Naive thymus-derived CD4-positive, alpha-beta T cell (primary cell): ENCODE measurements at regions of chr3 and their contacts with region 1.

Region 1: GRCh38 chr3:107522510-107523288 is at the start of gene BBX:
- DNase-seq: peak; percentile 88 to 97 (median 97)
- ATAC-seq: peak; percentile 95
- H3K4me3 ChIP-seq: peak within 1 kb of the TSS; percentile 82
- H3K4me3 Mint-ChIP-seq: peak within 1 kb of the TSS; percentile 75 to 100 (median 98)
- H3K27ac ChIP-seq: peak within 1 kb of the TSS; percentile 91
- H3K27ac Mint-ChIP-seq: peak within 1 kb of the TSS; percentile 84 to 99 (median 97)
- H3K4me1 ChIP-seq: peaks cover 9 to 14% of the 10 kb centered on the region in 2 donors
- H3K4me1 Mint-ChIP-seq: peaks cover 17 to 35% (median 30%) of the 10 kb centered on the region in 7 donors
- H3K27me3 ChIP-seq: no peaks in the 10 kb centered on the region
- H3K27me3 Mint-ChIP-seq: peaks cover 0 to 2% (median 0%) of the 10 kb centered on the region in 5 donors
- total RNA-seq, gene BBX: 44.3 to 103 (median 73.5) TPM

Region 2: DNA sequence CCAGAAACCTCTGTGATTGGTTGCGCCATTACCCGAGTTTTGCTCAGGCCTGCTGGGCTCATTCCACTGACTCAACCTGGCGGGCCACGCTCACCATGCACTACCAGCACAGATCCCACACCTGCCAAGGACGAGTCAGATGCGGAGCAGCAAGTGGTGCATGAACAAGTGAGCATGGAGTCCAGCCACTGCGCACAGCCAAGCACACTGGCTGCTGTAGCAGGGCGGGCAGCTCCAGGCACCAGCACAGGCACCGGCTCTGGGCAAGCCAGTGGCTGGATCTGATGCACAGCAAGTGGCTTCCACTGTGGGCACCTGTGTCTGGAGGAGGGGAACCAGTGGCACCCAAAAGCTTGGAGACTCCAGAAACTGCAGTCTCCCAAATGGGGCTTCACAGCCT is 1764.2 kb before region 1 on chr3:
- CTCF ChIA-PET with region 1: no interaction called
- POLR2A ChIA-PET with region 1: no interaction called
- intact Hi-C with region 1: loop called in 1 of 2 experiments (anchors 5 kb)
- DNase-seq: no peak
- ATAC-seq: no peak
- H3K4me3 ChIP-seq: no peak overlapping the region
- H3K4me3 Mint-ChIP-seq: peak overlapping the region in 2 of 10 donors; percentile 4 to 12
- H3K27ac ChIP-seq: no peak overlapping the region
- H3K27ac Mint-ChIP-seq: peak overlapping the region in 7 of 9 donors; percentile 25 to 98 (median 68)
- H3K4me1 ChIP-seq: peaks cover 33 to 46% of the 10 kb centered on the region in 2 donors
- H3K4me1 Mint-ChIP-seq: peaks cover 28 to 84% (median 66%) of the 10 kb centered on the region in 7 donors
- H3K27me3 ChIP-seq: no peaks in the 10 kb centered on the region
- H3K27me3 Mint-ChIP-seq: no peaks in the 10 kb centered on the region

Region 3: DNA sequence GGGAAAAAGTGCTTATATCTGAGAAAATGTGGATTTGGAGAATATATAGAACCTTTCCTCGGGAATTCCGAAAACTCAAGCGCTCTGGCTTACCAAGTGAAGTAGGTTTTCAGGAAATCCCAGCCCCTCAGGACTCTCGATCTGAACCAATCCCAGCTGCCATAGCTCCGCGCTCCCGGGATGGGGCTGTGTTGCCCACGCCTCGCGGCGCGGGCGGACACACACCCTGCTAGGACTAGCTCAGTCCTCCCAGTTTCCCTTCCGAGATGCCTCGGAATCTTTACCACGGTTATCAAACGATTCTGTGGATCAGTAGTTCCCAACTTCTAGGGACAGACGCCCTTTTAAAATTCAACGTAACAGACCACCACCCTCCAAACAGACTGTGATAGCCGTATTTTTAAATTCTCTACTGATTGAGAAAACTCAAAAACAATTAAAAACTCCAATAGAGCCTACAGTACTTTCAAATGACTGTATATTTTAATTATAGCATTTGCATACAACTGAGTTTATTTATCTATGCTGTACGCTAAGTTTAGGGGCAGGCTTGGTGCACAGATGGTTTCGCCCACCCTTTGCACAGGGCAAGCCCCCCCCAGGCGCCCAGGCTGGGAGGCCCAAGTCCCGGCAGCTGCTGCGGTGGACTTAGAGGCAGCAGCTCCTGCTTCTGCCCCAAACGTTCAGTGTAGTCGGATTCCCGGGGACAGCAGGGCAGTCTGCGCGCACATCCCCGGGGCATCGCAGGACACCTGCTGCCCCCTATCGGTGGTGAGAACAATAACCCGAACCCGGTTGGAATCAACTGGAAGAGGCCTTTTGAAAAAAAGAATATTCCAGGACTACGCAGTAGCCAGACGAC is 93.1 kb before region 1 on chr3:
- CTCF ChIA-PET with region 1: no interaction called
- POLR2A ChIA-PET with region 1: interaction called, 8 read pairs
- intact Hi-C with region 1: loop called (anchors 1 kb)
- DNase-seq: peak; percentile 33 to 72 (median 61)
- ATAC-seq: peak; percentile 77
- H3K4me3 ChIP-seq: peak overlapping the region; percentile 76
- H3K4me3 Mint-ChIP-seq: peak overlapping the region; percentile 81 to 95 (median 90)
- H3K27ac ChIP-seq: no peak overlapping the region
- H3K27ac Mint-ChIP-seq: peak overlapping the region in 3 of 9 donors; percentile 25 to 80 (median 38)
- H3K4me1 ChIP-seq: peaks cover 11 to 12% of the 10 kb centered on the region in 2 donors
- H3K4me1 Mint-ChIP-seq: peaks cover 0 to 27% (median 13%) of the 10 kb centered on the region in 7 donors
- H3K27me3 ChIP-seq: no peaks in the 10 kb centered on the region
- H3K27me3 Mint-ChIP-seq: peaks cover 0 to 61% (median 0%) of the 10 kb centered on the region in 5 donors

Region 4: GRCh38 chr3:107441617-107442016 is 81.1 kb before region 1 on chr3:
- CTCF ChIA-PET with region 1: no interaction called
- POLR2A ChIA-PET with region 1: no interaction called
- intact Hi-C with region 1: no loop called
- DNase-seq: no peak
- ATAC-seq: no peak
- H3K4me3 ChIP-seq: no peak overlapping the region
- H3K4me3 Mint-ChIP-seq: no peak overlapping the region
- H3K27ac ChIP-seq: no peak overlapping the region
- H3K27ac Mint-ChIP-seq: no peak overlapping the region
- H3K4me1 ChIP-seq: no peaks in the 10 kb centered on the region
- H3K4me1 Mint-ChIP-seq: peaks cover 0 to 1% (median 0%) of the 10 kb centered on the region in 7 donors
- H3K27me3 ChIP-seq: peaks cover 0 to 4% of the 10 kb centered on the region in 2 donors
- H3K27me3 Mint-ChIP-seq: peaks cover 0 to 6% (median 4%) of the 10 kb centered on the region in 5 donors

Region 5: DNA sequence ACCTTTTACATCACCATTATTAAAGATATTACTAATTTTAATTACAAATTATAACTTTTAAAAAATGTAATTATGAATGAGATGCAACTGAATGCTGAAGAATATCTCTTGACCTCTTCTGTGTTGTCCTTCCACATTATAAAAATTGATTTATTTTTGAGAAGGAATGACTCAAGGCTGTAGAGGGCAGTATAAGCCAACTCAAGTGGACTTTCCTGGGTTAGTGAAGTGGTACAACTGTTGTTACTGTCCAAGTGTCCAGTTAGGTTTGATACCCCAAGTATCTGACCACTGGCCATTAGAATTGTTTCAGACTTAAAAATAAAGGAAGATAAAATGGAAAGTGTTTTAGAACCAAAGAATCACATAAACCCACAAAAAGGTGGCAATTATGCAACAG is 52.0 kb after region 1 on chr3:
- CTCF ChIA-PET with region 1: no interaction called
- POLR2A ChIA-PET with region 1: no interaction called
- intact Hi-C with region 1: loop called in 1 of 2 experiments (anchors 5 kb)
- DNase-seq: peak in 1 of 9 donors; percentile 5
- ATAC-seq: peak; percentile 63
- H3K4me3 ChIP-seq: no peak overlapping the region
- H3K4me3 Mint-ChIP-seq: no peak overlapping the region
- H3K27ac ChIP-seq: no peak overlapping the region
- H3K27ac Mint-ChIP-seq: no peak overlapping the region
- H3K4me1 ChIP-seq: peaks cover 0 to 9% of the 10 kb centered on the region in 2 donors
- H3K4me1 Mint-ChIP-seq: peaks cover 10 to 61% (median 51%) of the 10 kb centered on the region in 7 donors
- H3K27me3 ChIP-seq: no peaks in the 10 kb centered on the region
- H3K27me3 Mint-ChIP-seq: no peaks in the 10 kb centered on the region

Region 6: DNA sequence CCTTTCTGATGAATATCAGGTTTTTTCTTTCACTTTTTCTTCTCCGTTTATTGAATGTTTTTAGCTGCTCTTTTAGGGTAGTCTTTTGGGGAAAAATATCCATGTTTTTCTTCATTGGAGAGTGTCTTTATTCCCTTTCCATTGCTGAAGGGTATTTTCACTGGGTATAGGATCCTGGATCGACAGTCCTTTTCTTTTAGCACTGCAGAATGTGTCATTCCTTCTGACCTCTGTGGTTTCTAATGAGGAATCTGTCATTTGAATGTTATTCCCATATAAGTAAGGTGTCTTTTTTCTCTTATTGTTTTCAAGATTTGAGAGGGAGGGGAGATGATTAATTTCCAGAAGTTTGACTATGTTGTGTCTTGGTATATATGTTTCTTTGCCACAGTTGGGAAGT is 96.8 kb after region 1 on chr3:
- CTCF ChIA-PET with region 1: no interaction called
- POLR2A ChIA-PET with region 1: no interaction called
- intact Hi-C with region 1: no loop called
- DNase-seq: no peak
- ATAC-seq: no peak
- H3K4me3 ChIP-seq: no peak overlapping the region
- H3K4me3 Mint-ChIP-seq: peak overlapping the region in 4 of 10 donors; percentile 8 to 23 (median 12)
- H3K27ac ChIP-seq: no peak overlapping the region
- H3K27ac Mint-ChIP-seq: peak overlapping the region in 1 of 9 donors; percentile 20
- H3K4me1 ChIP-seq: no peaks in the 10 kb centered on the region
- H3K4me1 Mint-ChIP-seq: peaks cover 10 to 88% (median 80%) of the 10 kb centered on the region in 7 donors
- H3K27me3 ChIP-seq: no peaks in the 10 kb centered on the region
- H3K27me3 Mint-ChIP-seq: no peaks in the 10 kb centered on the region

Region 7: GRCh38 chr3:107740992-107741896 is 218.5 kb after region 1 on chr3:
- CTCF ChIA-PET with region 1: no interaction called
- POLR2A ChIA-PET with region 1: no interaction called
- intact Hi-C with region 1: loop called in 1 of 2 experiments (anchors 5 kb)
- DNase-seq: peak in 6 of 9 donors; percentile 3 to 42 (median 22)
- ATAC-seq: no peak
- H3K4me3 ChIP-seq: no peak overlapping the region
- H3K4me3 Mint-ChIP-seq: no peak overlapping the region
- H3K27ac ChIP-seq: no peak overlapping the region
- H3K27ac Mint-ChIP-seq: no peak overlapping the region
- H3K4me1 ChIP-seq: no peaks in the 10 kb centered on the region
- H3K4me1 Mint-ChIP-seq: peaks cover 0 to 12% (median 0%) of the 10 kb centered on the region in 7 donors
- H3K27me3 ChIP-seq: no peaks in the 10 kb centered on the region
- H3K27me3 Mint-ChIP-seq: no peaks in the 10 kb centered on the region

Region 8: DNA sequence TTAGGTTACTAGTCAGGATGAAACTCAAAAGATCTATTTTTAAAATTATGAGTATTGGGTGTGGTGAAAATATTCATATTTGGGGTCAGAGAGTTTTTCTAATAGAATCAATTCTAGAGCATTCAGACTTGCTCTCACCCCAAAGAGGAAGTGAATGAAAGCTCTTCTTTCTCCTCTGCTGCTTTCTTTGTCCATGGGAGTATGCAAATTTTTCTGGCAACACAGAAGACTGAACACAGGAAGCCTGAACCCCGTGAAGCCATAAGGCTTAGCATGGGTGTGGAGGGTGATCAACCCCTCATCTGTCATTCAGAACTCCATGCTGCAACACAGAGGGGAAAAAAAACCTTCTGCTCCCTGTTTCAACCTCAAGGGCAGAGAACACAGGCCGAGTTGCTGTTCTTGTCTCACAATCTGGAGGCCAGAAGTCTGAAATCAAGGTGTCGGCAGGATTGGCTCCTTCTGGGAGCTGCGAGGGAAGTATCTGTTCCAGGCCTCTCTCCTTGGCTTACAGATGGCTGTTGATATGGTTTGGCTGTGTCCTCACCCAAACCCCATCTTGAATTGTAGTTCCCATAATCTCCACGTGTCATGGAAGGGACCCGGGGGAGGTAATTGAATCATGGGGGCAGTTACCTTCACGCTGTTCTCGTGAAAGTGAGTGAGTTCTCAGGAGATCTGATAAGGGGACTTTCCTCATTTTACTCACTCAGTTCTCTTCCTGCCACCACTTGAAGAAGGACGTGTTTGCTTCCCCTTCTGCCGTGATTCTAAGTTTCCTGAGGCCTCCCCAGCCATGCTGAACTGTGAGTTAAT is 601.8 kb after region 1 on chr3:
- CTCF ChIA-PET with region 1: no interaction called
- POLR2A ChIA-PET with region 1: no interaction called
- intact Hi-C with region 1: loop called (anchors 2 to 10 kb)
- DNase-seq: peak; percentile 33 to 88 (median 74)
- ATAC-seq: peak; percentile 79
- H3K4me3 ChIP-seq: peak overlapping the region; percentile 66
- H3K4me3 Mint-ChIP-seq: peak overlapping the region; percentile 82 to 98 (median 90)
- H3K27ac ChIP-seq: peak overlapping the region; percentile 89
- H3K27ac Mint-ChIP-seq: peak overlapping the region; percentile 92 to 99 (median 97)
- H3K4me1 ChIP-seq: peaks cover 48 to 56% of the 10 kb centered on the region in 2 donors
- H3K4me1 Mint-ChIP-seq: peaks cover 52 to 92% (median 68%) of the 10 kb centered on the region in 7 donors
- H3K27me3 ChIP-seq: no peaks in the 10 kb centered on the region
- H3K27me3 Mint-ChIP-seq: peaks cover 0 to 2% (median 0%) of the 10 kb centered on the region in 5 donors

Region 9: GRCh38 chr3:108818404-108818803 is 1295.7 kb after region 1 on chr3:
- CTCF ChIA-PET with region 1: no interaction called
- POLR2A ChIA-PET with region 1: no interaction called
- intact Hi-C with region 1: loop called (anchors 5 kb)
- DNase-seq: peak in 8 of 9 donors; percentile 43 to 82 (median 71)
- ATAC-seq: peak; percentile 95
- H3K4me3 ChIP-seq: no peak overlapping the region
- H3K4me3 Mint-ChIP-seq: peak overlapping the region in 8 of 10 donors; percentile 17 to 75 (median 55)
- H3K27ac ChIP-seq: no peak overlapping the region
- H3K27ac Mint-ChIP-seq: peak overlapping the region; percentile 2 to 100 (median 80)
- H3K4me1 ChIP-seq: peaks cover 26 to 29% of the 10 kb centered on the region in 2 donors
- H3K4me1 Mint-ChIP-seq: peaks cover 14 to 44% (median 31%) of the 10 kb centered on the region in 7 donors
- H3K27me3 ChIP-seq: no peaks in the 10 kb centered on the region
- H3K27me3 Mint-ChIP-seq: no peaks in the 10 kb centered on the region